Gastrocnemius medialis (tissue), 4 donors: ENCODE measurements at regions of chr7 and their contacts with region 1.

Region 1: DNA sequence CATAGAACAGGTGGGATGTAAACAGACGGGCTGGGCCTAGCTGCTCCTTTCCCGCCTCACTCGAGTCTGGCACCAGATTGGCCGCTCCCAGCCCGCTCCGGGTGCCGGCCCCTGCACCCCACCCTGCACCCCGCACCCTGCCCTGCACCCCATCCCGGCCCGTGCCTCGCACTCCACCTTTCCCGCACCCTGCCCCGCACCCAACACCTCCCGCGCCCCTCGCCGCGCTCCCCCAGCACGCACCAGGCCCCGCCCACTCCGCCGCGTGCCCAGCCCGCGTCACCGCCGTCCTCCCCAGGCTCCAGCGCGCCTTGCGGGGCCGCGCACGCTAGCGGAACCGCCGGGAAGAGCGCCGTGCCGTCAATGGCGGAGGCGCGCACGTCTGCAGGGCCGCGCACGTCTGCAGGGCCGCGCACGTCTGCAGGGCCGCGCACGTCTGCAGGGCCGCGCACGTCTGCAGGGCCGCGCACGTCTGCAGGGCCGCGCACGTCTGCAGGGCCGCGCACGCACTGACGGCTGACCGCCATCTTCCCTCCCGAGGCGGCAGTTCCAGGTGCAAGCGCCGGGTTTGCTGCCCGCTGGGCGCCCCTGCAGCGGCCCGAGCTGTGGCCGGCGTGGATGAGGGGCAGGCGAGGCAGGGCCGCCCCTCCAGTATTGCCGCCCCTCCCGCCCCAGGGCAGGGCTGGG is at the start of gene UBE3C:
- DNase-seq: peak; percentile 72 to 86
- ATAC-seq: peak; percentile 85
- H3K4me3 ChIP-seq: peak within 1 kb of the TSS; percentile 79 to 93 (median 80)
- H3K27ac ChIP-seq: peak within 1 kb of the TSS; percentile 81 to 94 (median 91)
- H3K4me1 ChIP-seq: peaks cover 30 to 42% of the 10 kb centered on the region in 2 donors
- H3K27me3 ChIP-seq: no peaks in the 10 kb centered on the region
- CTCF ChIP-seq: no peak
- POLR2A ChIP-seq: peak; percentile 79 to 89
- total RNA-seq, gene UBE3C: 64.4 to 123 (median 76.3) TPM

Region 2: DNA sequence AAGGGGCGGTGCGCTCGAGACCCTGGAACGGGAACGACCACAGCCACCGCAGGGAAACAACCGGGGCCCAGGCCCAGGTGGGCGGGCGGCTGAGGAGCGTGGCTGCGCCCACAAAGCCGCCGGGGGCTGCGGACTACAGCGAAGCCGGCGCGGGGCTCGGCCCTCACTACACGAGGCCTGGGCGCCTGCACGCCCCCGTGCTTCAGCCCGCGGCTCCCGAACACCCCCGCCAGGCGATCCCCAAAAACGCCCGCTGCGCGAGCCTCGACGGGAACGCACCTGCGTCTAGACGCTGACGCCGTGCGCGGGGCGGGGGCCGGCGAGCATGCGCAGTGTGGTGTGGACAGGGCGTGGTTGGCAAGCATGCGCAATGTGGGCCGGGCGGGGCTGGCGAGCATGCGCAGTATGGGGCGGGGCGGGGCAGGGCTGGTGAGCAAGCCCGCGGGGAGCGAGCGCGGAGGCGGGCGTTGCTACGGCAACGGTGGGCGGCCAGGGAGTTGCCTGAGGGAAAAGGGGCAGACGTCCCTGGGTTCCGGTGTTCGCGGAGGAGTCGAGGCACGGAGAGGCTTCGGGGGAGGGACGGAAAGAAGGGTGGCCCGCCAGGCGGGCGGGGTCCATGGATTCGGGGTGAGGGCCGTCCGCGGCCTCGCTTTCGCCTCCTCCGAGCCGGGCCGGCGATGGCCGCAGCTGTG is 498.2 kb before region 1 on chr7 and contains the start of gene RNF32:
- in situ Hi-C with region 1: no loop called
- intact Hi-C with region 1: loop called (anchors 5 kb)
- DNase-seq: peak; percentile 75 to 76
- ATAC-seq: peak; percentile 89
- H3K4me3 ChIP-seq: peak within 1 kb of the TSS; percentile 67 to 93 (median 79)
- H3K27ac ChIP-seq: peak within 1 kb of the TSS; percentile 56 to 91 (median 72)
- H3K4me1 ChIP-seq: peaks cover 0 to 11% of the 10 kb centered on the region in 2 donors
- H3K27me3 ChIP-seq: peaks cover 5 to 9% (median 5%) of the 10 kb centered on the region in 3 donors
- CTCF ChIP-seq: no peak
- POLR2A ChIP-seq: peak; percentile 33 to 58
- total RNA-seq, gene RNF32: 0.85 TPM in 1 of 4 donors, not detected in the others

Region 3: DNA sequence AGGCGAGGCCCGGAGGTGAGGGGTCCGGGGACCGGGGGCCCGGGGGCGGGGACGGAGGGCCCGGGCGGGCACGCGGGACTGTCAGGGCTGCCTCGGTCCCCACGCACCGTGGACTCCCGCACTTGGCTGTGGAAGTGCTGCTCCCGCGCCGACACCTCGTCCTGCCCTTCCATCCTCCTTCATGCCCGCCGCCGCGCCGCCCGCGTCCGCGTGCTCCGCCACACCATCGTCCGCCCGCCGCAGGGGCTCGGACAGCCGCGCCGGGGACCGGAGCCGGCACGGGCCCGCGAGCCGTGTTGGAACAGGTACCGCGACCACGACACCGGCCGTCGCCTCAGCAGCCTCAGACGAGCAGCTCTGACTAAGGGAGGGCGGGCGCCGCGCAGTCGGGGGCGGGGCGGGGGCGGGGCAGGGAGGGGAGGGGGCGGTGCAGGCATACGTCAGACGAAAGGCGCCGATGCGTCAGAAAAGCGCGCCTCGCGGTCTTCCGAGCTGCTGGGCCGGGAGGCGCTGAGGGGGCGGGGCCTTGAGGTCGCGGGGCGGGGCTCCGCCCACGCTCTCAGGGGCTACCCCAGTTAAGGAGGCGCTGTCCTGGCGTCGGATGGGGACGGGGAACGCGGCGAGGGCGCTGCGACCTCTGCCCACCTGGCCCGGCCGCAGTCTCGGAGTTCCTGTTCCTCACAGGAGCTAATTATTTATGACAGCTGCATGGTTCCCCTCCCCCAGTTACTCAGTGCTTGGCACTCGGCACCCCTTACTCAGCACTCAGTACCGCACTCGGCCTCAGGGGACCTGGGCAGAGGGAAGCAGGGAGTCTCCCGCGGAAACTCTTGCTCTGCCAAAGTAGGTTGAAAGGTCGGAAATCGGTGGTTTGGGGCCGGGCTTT is 245.5 kb before region 1 on chr7 and contains the start of gene LMBR1:
- in situ Hi-C with region 1: no loop called
- intact Hi-C with region 1: loop called (anchors 5 kb)
- DNase-seq: peak; percentile 92 to 96
- ATAC-seq: peak; percentile 89 to 90
- H3K4me3 ChIP-seq: peak within 1 kb of the TSS; percentile 82 to 97 (median 87)
- H3K27ac ChIP-seq: peak within 1 kb of the TSS; percentile 90 to 99 (median 96)
- H3K4me1 ChIP-seq: peaks cover 27 to 47% of the 10 kb centered on the region in 2 donors
- H3K27me3 ChIP-seq: no peaks in the 10 kb centered on the region
- CTCF ChIP-seq: peak; percentile 79 to 94 (median 89)
- POLR2A ChIP-seq: peak; percentile 75 to 83
- total RNA-seq, gene LMBR1: 27.9 to 87.0 (median 35.3) TPM

Region 4: GRCh38 chr7:156949541-156950380 is 188.8 kb before region 1 on chr7 and contains the start of gene NOM1:
- in situ Hi-C with region 1: loop called in 2 of 4 experiments (anchors 10 to 25 kb)
- intact Hi-C with region 1: no loop called
- DNase-seq: peak; percentile 69 to 74
- ATAC-seq: peak; percentile 93 to 97
- H3K4me3 ChIP-seq: peak within 1 kb of the TSS; percentile 84 to 95 (median 92)
- H3K27ac ChIP-seq: peak within 1 kb of the TSS; percentile 55 to 84 (median 72)
- H3K4me1 ChIP-seq: peaks cover 25% of the 10 kb centered on the region in 2 donors
- H3K27me3 ChIP-seq: peaks cover 0 to 4% (median 4%) of the 10 kb centered on the region in 3 donors
- CTCF ChIP-seq: peak in 4 of 5 experiments; percentile 95 to 97 (median 95)
- POLR2A ChIP-seq: peak in 1 of 2 donors; percentile 49
- total RNA-seq, gene NOM1: 12.9 to 18.0 (median 14.3) TPM

Region 5: DNA sequence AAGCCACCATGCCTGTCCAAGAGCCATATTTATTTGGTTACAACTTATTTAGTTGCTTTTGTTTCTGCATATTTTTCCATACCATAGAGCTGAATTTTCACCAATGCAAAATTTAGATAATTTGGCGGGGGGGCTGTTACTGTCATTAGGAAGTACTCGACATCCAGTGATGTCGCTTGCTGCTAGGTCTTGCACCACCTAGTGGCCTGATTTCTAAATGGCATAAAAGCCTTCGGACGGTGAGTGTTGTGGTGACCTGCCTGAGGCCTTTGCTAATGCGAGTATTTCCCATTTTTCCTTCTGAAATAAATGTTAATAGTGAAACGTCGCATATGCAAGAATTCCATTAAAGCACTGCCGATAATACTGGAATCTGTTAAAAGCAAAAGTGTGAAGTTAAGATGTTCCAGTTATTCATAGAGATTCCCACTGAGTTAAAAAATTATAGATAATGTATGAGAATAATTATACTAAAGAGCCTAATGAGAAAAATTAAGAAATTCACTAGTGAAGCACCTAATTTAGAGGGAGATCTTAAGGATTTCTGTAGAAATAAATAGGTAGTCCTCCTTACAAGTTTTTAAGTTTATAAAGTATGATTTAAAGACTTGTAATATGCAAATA is 112.2 kb after region 1 on chr7:
- in situ Hi-C with region 1: loop called in 1 of 4 experiments (anchors 10 kb)
- intact Hi-C with region 1: no loop called
- DNase-seq: no peak
- ATAC-seq: peak in 1 of 2 donors; percentile 74
- H3K4me3 ChIP-seq: no peak overlapping the region
- H3K27ac ChIP-seq: no peak overlapping the region
- H3K4me1 ChIP-seq: no peaks in the 10 kb centered on the region
- H3K27me3 ChIP-seq: no peaks in the 10 kb centered on the region
- CTCF ChIP-seq: peak; percentile 39 to 75 (median 53)
- POLR2A ChIP-seq: no peak

Region 6: GRCh38 chr7:157404845-157405481 is 266.4 kb after region 1 on chr7:
- in situ Hi-C with region 1: no loop called
- intact Hi-C with region 1: loop called (anchors 10 kb)
- DNase-seq: peak in 1 of 2 donors; percentile 59
- ATAC-seq: peak; percentile 34 to 47
- H3K4me3 ChIP-seq: no peak overlapping the region
- H3K27ac ChIP-seq: peak overlapping the region; percentile 64 to 81 (median 77)
- H3K4me1 ChIP-seq: peaks cover 23 to 37% of the 10 kb centered on the region in 2 donors
- H3K27me3 ChIP-seq: no peaks in the 10 kb centered on the region
- CTCF ChIP-seq: no peak
- POLR2A ChIP-seq: no peak